MCF 10A (cell line): ENCODE measurements at regions of chr21 and their contacts with region 1.

Region 1: DNA sequence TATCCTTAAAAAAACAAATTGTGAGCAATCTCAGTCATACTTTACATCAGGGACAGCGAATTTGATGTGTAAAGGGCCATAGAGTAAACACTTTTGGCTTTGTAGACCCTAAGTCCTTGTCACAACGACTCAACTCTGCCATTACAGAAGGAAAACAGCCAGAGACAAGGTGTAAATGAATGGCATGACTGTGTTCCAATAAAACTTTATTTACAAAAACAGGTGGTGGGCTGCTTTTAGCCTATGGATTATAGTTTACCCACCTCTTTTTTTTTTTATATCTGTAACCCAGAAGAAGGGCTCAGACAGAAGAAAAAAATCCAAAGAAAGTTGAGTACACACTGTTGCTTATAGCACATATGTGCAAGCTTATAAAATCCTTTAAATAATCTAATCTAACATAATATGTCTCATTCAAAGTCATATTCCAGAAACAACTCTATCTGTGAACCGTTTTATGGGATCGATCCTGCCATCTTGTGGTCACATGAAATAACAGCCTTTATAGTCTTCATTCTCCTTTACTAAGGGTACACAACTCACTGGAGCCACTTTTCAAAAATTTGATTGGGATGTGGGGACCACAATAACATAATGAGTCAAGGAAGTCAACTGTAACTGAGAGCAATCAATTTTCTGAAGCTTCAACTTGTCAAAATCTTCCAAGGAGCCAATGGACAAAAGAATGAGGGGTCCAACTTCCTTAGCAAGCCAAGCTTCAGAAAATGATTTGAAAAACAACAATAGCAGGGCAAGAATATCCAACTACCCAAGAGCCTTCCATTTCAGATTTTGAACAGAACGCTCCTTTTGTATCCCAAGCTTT is 142.2 kb upstream of the KRTAP19-8 start:
- DNase-seq: peak; percentile 57
- H3K4me3 Mint-ChIP-seq: no peak overlapping the region
- H3K27ac Mint-ChIP-seq: no peak overlapping the region
- H3K4me1 Mint-ChIP-seq: no peaks in the 10 kb centered on the region
- H3K27me3 Mint-ChIP-seq: no peaks in the 10 kb centered on the region
- CTCF ChIP-seq: peak; percentile 53

Region 2: DNA sequence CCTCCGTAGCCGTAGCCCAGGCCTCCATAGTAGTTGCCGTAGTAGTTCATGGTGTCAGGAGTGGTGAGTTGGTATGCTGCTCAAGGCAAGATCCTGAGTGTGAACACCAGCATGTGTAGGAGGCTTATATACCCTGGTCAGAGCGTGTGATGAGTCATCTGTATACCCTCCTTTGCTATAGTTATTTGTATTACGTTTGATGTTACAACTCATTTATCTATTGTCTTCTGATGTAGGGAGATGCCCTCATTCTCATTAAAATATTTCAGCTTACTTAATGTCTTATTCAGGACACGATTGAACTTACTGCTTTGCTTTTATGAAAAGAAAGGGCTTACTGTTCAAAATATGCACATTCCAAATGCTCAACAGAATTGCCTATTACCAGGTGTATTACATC is 678.4 kb before region 1 on chr21 and contains the start of gene KRTAP19-5:
- CTCF ChIA-PET with region 1: no interaction called
- POLR2A ChIA-PET with region 1: no interaction called
- intact Hi-C with region 1: no loop called
- DNase-seq: no peak
- H3K4me3 Mint-ChIP-seq: no peak within 1 kb of the TSS
- H3K27ac Mint-ChIP-seq: no peak within 1 kb of the TSS
- H3K4me1 Mint-ChIP-seq: no peaks in the 10 kb centered on the region
- H3K27me3 Mint-ChIP-seq: peaks cover 44% of the 10 kb centered on the region
- CTCF ChIP-seq: no peak
- total RNA-seq, gene KRTAP19-5: not detected in 2 replicates

Region 3: GRCh38 chr21:31098576-31099005 is 81.9 kb before region 1 on chr21:
- CTCF ChIA-PET with region 1: interaction called, 251 read pairs
- POLR2A ChIA-PET with region 1: no interaction called
- intact Hi-C with region 1: loop called (anchors 1 kb)
- DNase-seq: peak; percentile 55
- H3K4me3 Mint-ChIP-seq: no peak overlapping the region
- H3K27ac Mint-ChIP-seq: no peak overlapping the region
- H3K4me1 Mint-ChIP-seq: no peaks in the 10 kb centered on the region
- H3K27me3 Mint-ChIP-seq: peaks cover 16% of the 10 kb centered on the region
- CTCF ChIP-seq: peak; percentile 82

Region 4: DNA sequence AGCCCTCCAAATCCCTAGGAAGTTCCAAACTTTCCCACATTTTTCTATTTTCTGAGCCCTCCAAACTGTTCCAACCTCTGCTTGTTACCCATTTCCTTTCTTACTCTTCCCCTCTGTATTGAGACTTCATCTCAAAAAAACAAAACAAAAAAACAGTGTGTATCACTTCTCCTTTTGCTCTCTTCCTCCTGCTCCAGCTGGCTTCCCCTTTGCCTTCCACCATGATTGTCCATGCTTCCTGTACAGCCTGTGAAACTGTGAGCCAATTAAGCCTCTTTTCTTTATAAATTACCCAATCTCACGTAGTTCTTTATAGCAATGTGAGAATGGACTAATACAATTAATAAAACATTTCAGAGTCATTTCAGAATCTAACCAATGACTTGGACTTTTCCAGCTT is 72.6 kb before region 1 on chr21:
- CTCF ChIA-PET with region 1: interaction called, 251 read pairs
- POLR2A ChIA-PET with region 1: no interaction called
- intact Hi-C with region 1: loop called (anchors 1 kb)
- DNase-seq: no peak
- H3K4me3 Mint-ChIP-seq: no peak overlapping the region
- H3K27ac Mint-ChIP-seq: no peak overlapping the region
- H3K4me1 Mint-ChIP-seq: no peaks in the 10 kb centered on the region
- H3K27me3 Mint-ChIP-seq: no peaks in the 10 kb centered on the region
- CTCF ChIP-seq: no peak

Region 5: GRCh38 chr21:31117128-31117916 is 63.1 kb before region 1 on chr21:
- CTCF ChIA-PET with region 1: interaction called, 66 read pairs
- POLR2A ChIA-PET with region 1: no interaction called
- intact Hi-C with region 1: no loop called
- DNase-seq: peak; percentile 49
- H3K4me3 Mint-ChIP-seq: no peak overlapping the region
- H3K27ac Mint-ChIP-seq: no peak overlapping the region
- H3K4me1 Mint-ChIP-seq: no peaks in the 10 kb centered on the region
- H3K27me3 Mint-ChIP-seq: no peaks in the 10 kb centered on the region
- CTCF ChIP-seq: no peak

Region 6: DNA sequence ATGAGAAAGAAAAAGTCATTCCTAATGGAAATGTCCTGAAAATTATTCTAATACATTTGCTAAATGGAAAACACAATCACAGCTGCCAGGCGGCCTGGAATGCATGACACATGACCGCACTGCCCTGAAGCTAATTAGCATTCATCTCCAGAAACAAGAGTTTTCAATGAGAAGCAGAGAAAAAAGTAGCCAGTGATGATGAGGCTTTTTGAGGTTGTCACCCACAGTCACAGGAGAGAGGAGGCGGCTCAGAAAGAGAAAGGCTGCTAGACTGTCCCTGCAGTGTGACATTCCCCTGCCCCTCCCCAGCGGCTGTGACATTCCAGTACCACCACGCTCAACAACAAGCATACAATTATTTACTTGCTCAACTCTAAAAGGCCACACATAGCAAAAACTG is 19.3 kb before region 1 on chr21:
- CTCF ChIA-PET with region 1: interaction called, 11 read pairs
- POLR2A ChIA-PET with region 1: no interaction called
- intact Hi-C with region 1: no loop called
- DNase-seq: peak; percentile 18
- H3K4me3 Mint-ChIP-seq: no peak overlapping the region
- H3K27ac Mint-ChIP-seq: no peak overlapping the region
- H3K4me1 Mint-ChIP-seq: peaks cover 7% of the 10 kb centered on the region
- H3K27me3 Mint-ChIP-seq: no peaks in the 10 kb centered on the region
- CTCF ChIP-seq: no peak

Region 7: GRCh38 chr21:31604591-31605190 is 424.2 kb after region 1 on chr21:
- CTCF ChIA-PET with region 1: interaction called, 12 read pairs
- POLR2A ChIA-PET with region 1: no interaction called
- intact Hi-C with region 1: no loop called
- DNase-seq: peak; percentile 80
- H3K4me3 Mint-ChIP-seq: no peak overlapping the region
- H3K27ac Mint-ChIP-seq: no peak overlapping the region
- H3K4me1 Mint-ChIP-seq: no peaks in the 10 kb centered on the region
- H3K27me3 Mint-ChIP-seq: no peaks in the 10 kb centered on the region
- CTCF ChIP-seq: peak; percentile 83